ENCODE measurements at regions of chr19 and their contacts with region 1.

Region 1: GRCh38 chr19:41144403-41144802 is 30.2 kb downstream of the CYP2F1 start:
- DNase-seq: peak; percentile 60 to 90
- H3K4me3 ChIP-seq: no peak overlapping the region
- H3K4me1 ChIP-seq: no peaks in the 10 kb centered on the region
- H3K27me3 ChIP-seq: peaks cover 3% of the 10 kb centered on the region; the same call in 1 of the 2 replicates

Region 2: DNA sequence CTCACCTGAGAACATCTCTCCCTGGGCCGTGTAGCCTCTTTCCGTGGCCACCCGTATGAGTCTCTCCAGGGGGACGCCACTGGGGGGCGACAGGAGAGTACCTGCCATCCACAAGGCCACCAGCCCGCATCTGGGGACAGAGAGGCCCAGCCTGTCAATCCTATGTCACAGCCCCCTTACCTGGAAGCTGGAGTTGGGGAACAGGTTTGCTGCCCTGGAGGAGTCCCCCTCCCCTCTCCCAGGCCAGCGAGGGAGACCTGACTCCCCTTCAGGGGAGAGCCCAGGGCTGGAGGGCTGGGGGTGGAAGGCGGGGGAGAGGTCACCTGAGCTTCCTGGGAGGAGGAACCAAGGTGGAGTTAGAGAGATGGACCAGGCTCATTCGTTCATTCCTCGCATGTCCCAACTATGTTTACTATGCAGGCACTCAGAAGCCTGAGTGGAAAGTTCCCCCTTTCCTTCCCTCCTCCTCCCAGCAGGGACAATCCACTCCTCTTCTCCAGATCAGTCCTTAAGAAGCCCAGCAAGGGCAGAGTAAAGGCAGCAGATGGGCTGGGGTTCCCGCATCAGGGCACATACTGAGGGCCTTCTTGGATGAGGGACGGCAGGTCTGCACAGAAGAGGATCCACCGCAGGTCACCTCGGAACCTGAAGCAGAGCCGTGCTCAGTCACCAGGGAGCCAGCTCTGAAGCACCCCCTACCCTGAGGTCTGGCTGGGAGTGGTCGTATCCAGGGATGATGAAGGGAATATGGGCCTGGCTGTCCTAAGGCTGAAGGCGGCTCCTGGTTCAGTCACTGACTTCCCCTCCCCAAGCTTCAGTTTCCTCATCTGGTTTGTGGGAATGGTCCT is 399.6 kb before region 1 on chr19:
- in situ Hi-C with region 1: no loop called
- DNase-seq: no peak
- H3K4me3 ChIP-seq: no peak overlapping the region
- H3K4me1 ChIP-seq: peaks cover 11% of the 10 kb centered on the region
- H3K27me3 ChIP-seq: no peaks in the 10 kb centered on the region

Region 3: DNA sequence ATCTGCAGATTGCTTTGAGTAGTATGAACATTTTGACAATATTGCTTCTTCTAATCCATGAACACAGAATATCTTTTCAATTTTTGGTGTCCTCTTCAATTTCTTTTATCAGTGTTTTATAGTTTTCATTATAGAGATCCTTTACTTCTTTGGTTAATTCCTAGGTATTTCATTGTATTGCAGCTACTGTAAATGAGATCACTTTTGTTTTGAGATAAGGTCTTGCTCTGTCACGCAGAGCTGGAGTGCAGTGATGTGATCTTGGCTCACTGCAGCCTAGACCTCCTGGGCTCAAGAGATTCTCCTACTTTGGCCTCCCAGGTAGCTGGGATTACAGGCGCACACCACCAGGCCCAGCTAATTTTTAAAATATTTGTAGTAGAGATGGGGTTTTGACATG is 272.2 kb before region 1 on chr19:
- in situ Hi-C with region 1: no loop called
- DNase-seq: no peak
- H3K4me3 ChIP-seq: no peak overlapping the region
- H3K4me1 ChIP-seq: no peaks in the 10 kb centered on the region
- H3K27me3 ChIP-seq: peaks cover 4% of the 10 kb centered on the region; the same call in 1 of the 2 replicates

Region 4: DNA sequence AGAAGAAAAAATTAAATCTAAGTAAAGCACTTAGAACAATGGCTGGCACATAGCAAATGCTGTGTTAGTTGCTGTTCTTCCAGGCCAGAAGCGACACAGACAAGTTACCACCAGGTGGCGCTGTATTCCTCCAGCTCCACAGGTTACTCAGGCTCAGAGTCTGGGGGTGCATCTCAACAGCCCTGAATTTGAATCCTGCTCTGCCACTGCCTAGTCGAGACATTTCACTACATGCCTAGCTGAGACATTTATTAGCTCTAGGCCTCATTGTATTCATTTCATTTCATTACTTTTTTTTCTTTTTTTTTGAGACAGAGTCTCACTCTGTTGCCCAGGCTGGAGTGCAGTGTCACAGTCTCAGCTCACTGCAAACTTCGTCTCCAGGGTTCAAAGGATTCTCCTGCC is 169.8 kb before region 1 on chr19:
- in situ Hi-C with region 1: loop called (anchors 10 kb)
- DNase-seq: peak; percentile 63 to 83
- H3K4me3 ChIP-seq: no peak overlapping the region
- H3K4me1 ChIP-seq: no peaks in the 10 kb centered on the region
- H3K27me3 ChIP-seq: no peaks in the 10 kb centered on the region

Measured in HAP-1 (cell line).